ENCODE measurements at regions of chr6 and their contacts with region 1.

Region 1: GRCh38 chr6:139134817-139135581 is at the start of gene HECA:
- DNase-seq: peak; percentile 94
- ATAC-seq: peak; percentile 93
- H3K4me3 ChIP-seq: peak within 1 kb of the TSS; percentile 75
- H3K27ac ChIP-seq: peak within 1 kb of the TSS; percentile 24; the same call in 1 of the 2 replicates
- H3K4me1 ChIP-seq: peaks cover 1% of the 10 kb centered on the region; the same call in 1 of the 2 replicates
- H3K27me3 ChIP-seq: no peaks in the 10 kb centered on the region; the same call in 1 of the 2 replicates
- CTCF ChIP-seq: no peak
- POLR2A ChIP-seq: peak; percentile 68; the same call in 1 of the 2 replicates
- RAD21 ChIP-seq: no peak
- total RNA-seq, gene HECA: 4.3 and 7.2 TPM in 2 replicates

Region 2: DNA sequence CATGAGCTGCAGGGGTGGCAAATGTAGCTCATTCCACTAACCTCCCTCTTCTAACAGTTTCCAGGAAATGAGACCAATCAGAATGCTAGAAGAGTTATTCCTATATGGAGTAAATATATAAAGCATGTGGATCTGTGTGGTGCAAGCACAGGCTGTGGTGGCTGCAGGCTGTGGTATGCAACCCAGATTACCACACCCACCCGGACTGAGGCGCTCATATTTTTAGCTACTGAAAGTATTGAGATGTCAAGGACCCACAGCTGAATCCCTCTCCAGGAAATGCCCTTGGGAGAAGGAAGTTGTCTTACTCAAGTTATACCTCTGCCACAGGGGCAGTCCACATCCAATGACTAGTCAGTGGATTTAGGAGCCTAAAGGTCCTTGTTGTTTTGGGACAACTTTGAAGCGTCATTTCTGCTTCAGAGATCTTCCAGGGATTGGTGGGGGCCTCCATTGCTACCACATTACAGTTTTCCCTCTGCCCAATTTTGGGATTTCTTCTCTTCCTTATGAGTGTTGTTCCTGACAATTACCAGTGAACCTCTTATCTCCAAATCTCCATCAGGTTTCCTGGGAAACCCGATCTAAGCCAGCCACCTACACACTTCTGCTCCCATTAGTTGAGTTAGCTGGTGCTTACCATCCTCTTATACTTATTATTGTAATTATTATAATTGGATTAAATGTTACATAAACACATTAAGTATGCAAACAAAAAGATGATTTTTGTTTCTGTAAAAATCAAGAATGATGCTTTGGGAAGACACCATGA is 134.9 kb before region 1 on chr6:
- CTCF ChIA-PET with region 1: no interaction called
- POLR2A ChIA-PET with region 1: no interaction called
- dilution Hi-C with region 1: no loop called
- in situ Hi-C with region 1: no loop called
- intact Hi-C with region 1: no loop called
- DNase-seq: no peak
- ATAC-seq: peak; percentile 49
- H3K4me3 ChIP-seq: no peak overlapping the region
- H3K27ac ChIP-seq: no peak overlapping the region
- H3K4me1 ChIP-seq: no peaks in the 10 kb centered on the region
- H3K27me3 ChIP-seq: no peaks in the 10 kb centered on the region
- CTCF ChIP-seq: no peak
- POLR2A ChIP-seq: no peak
- RAD21 ChIP-seq: no peak

Region 3: GRCh38 chr6:139153855-139154254 is 18.9 kb after region 1 on chr6:
- CTCF ChIA-PET with region 1: interaction called, 4 read pairs
- POLR2A ChIA-PET with region 1: no interaction called
- dilution Hi-C with region 1: no loop called
- in situ Hi-C with region 1: no loop called
- intact Hi-C with region 1: loop called (anchors 2 kb)
- DNase-seq: peak; percentile 82
- ATAC-seq: peak; percentile 83
- H3K4me3 ChIP-seq: no peak overlapping the region
- H3K27ac ChIP-seq: peak overlapping the region; percentile 66; the same call in 1 of the 2 replicates
- H3K4me1 ChIP-seq: peaks cover 22% of the 10 kb centered on the region
- H3K27me3 ChIP-seq: no peaks in the 10 kb centered on the region
- CTCF ChIP-seq: no peak
- POLR2A ChIP-seq: no peak
- RAD21 ChIP-seq: no peak

Region 4: GRCh38 chr6:139278190-139278589 is 143.2 kb after region 1 on chr6:
- CTCF ChIA-PET with region 1: no interaction called
- POLR2A ChIA-PET with region 1: no interaction called
- dilution Hi-C with region 1: no loop called
- in situ Hi-C with region 1: no loop called
- intact Hi-C with region 1: no loop called
- DNase-seq: peak; percentile 53
- ATAC-seq: peak; percentile 48
- H3K4me3 ChIP-seq: no peak overlapping the region
- H3K27ac ChIP-seq: no peak overlapping the region
- H3K4me1 ChIP-seq: no peaks in the 10 kb centered on the region
- H3K27me3 ChIP-seq: no peaks in the 10 kb centered on the region
- CTCF ChIP-seq: no peak
- POLR2A ChIP-seq: no peak
- RAD21 ChIP-seq: no peak